ENCODE measurements at regions of chr12 and their contacts with region 1.

Region 1: GRCh38 chr12:12032851-12033588 is 37.7 kb upstream of the BCL2L14 start:
- DNase-seq: peak; percentile 88 to 90
- H3K4me3 ChIP-seq: peak overlapping the region; percentile 33
- H3K4me3 Mint-ChIP-seq: peak overlapping the region; percentile 63
- H3K27ac Mint-ChIP-seq: no peak overlapping the region
- H3K4me1 ChIP-seq: peaks cover 21% of the 10 kb centered on the region
- H3K4me1 Mint-ChIP-seq: peaks cover 13% of the 10 kb centered on the region
- H3K27me3 ChIP-seq: no peaks in the 10 kb centered on the region
- H3K27me3 Mint-ChIP-seq: no peaks in the 10 kb centered on the region
- CTCF ChIP-seq: peak; percentile 96 to 97

Region 2: DNA sequence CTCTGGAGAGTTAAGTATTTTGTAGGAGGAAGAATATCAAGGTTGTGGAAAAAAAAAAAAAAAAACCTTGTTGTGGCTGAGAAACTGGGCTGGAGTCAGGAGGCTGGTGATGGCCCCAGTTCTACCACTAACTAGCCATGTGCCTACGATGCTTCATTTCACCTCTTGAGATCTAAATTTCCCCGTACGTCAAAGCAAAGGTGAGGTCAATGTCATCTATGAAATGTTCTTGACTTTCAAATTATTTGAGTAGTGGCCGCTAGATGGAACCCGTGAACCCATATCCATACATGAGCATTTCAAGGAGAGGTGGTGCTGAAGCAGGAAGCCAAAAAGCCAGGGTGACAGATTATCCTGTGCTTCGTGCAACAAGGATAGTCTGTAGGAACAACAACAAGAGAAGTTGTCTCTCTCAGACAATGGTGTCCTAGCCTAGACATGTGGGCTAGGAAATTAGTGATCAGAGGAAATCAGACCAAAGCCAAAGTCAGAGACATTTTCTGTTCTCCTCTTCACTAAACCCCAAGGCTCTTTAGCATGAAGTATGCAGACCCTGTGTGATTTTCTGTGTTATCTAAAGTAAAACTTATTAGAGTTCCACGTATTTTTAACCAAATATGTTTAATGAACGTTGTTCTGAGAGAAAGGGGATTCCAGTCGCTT is 479.0 kb before region 1 on chr12:
- CTCF ChIA-PET with region 1: interaction called, 13 read pairs
- POLR2A ChIA-PET with region 1: no interaction called
- intact Hi-C with region 1: loop called (anchors 1 kb)
- DNase-seq: peak; percentile 65 to 70
- H3K4me3 ChIP-seq: no peak overlapping the region
- H3K4me3 Mint-ChIP-seq: no peak overlapping the region
- H3K27ac Mint-ChIP-seq: no peak overlapping the region
- H3K4me1 ChIP-seq: peaks cover 8% of the 10 kb centered on the region; the same call in 1 of the 2 replicates
- H3K4me1 Mint-ChIP-seq: peaks cover 12% of the 10 kb centered on the region
- H3K27me3 ChIP-seq: 0 out of 2 replicates have a peak, but pooled peaks cover 1% of the 10 kb centered on the region
- H3K27me3 Mint-ChIP-seq: peaks cover 22% of the 10 kb centered on the region
- CTCF ChIP-seq: peak; percentile 70 to 73

Region 3: GRCh38 chr12:11581179-11581755 is 451.8 kb before region 1 on chr12:
- CTCF ChIA-PET with region 1: interaction called, 45 read pairs
- POLR2A ChIA-PET with region 1: no interaction called
- intact Hi-C with region 1: loop called (anchors 1 kb)
- DNase-seq: peak; percentile 59 to 76
- H3K4me3 ChIP-seq: no peak overlapping the region
- H3K4me3 Mint-ChIP-seq: no peak overlapping the region
- H3K27ac Mint-ChIP-seq: no peak overlapping the region
- H3K4me1 ChIP-seq: no peaks in the 10 kb centered on the region
- H3K4me1 Mint-ChIP-seq: no peaks in the 10 kb centered on the region
- H3K27me3 ChIP-seq: no peaks in the 10 kb centered on the region
- H3K27me3 Mint-ChIP-seq: peaks cover 12% of the 10 kb centered on the region
- CTCF ChIP-seq: peak; percentile 66 to 94

Region 4: GRCh38 chr12:11621797-11622423 is 411.1 kb before region 1 on chr12:
- CTCF ChIA-PET with region 1: interaction called, 9 read pairs
- POLR2A ChIA-PET with region 1: no interaction called
- intact Hi-C with region 1: loop called (anchors 1 kb)
- DNase-seq: peak; percentile 29 to 45
- H3K4me3 ChIP-seq: no peak overlapping the region
- H3K4me3 Mint-ChIP-seq: no peak overlapping the region
- H3K27ac Mint-ChIP-seq: peak overlapping the region; percentile 80
- H3K4me1 ChIP-seq: peaks cover 19% of the 10 kb centered on the region
- H3K4me1 Mint-ChIP-seq: peaks cover 26% of the 10 kb centered on the region
- H3K27me3 ChIP-seq: no peaks in the 10 kb centered on the region
- H3K27me3 Mint-ChIP-seq: no peaks in the 10 kb centered on the region
- CTCF ChIP-seq: peak in 1 of 2 experiments; percentile 35

Region 5: DNA sequence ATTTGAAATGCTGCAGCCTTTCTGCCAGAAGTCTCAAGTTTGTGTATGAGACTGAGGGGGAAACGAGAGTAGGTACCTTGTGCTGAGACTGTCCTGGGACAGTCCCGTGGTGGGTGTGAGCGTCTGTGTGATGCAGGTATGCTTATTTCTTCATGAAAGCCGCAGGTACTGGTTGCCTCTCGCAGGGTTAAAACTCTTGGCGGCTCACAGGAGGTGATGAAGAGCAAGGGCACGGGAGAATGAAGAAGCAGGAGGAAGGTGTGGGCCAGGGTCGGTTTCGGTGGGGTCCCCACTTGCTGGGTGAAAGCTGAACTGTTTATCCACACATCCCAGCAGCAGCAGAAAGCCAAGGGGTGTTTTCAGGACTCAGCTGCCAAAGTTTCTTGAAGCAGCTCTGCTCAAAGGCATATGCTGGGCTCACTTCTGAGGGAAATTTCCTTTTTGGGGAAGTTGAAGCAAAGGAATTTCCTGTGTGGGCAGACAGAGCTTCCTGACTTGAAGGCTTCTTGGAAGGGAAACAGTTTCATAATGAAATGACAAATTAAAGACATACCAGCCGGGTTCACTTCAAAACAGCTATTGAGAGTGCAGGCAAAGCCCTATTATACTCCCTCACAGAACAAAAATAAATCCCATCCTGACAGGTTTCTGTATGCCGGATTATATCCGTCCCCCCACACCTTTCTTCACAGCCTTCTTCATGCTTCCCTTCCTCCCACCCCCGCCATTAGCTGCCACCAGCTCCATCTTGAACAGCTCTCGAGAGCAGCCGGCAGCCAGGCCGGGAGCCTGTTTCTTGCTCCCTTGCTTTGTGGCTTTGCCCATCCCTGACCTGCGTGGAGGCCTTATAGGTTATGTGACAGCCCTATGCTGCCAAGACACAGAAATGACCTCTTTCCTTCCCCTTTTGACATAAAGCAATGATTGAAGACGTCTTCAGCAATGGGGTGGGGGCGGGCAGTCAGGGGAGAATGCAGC is 266.9 kb before region 1 on chr12:
- CTCF ChIA-PET with region 1: no interaction called
- POLR2A ChIA-PET with region 1: no interaction called
- intact Hi-C with region 1: no loop called
- DNase-seq: no peak
- H3K4me3 ChIP-seq: no peak overlapping the region
- H3K4me3 Mint-ChIP-seq: no peak overlapping the region
- H3K27ac Mint-ChIP-seq: no peak overlapping the region
- H3K4me1 ChIP-seq: peaks cover 25% of the 10 kb centered on the region
- H3K4me1 Mint-ChIP-seq: peaks cover 13% of the 10 kb centered on the region
- H3K27me3 ChIP-seq: no peaks in the 10 kb centered on the region
- H3K27me3 Mint-ChIP-seq: no peaks in the 10 kb centered on the region
- CTCF ChIP-seq: no peak

Region 6: GRCh38 chr12:11798856-11799501 is 234.0 kb before region 1 on chr12:
- CTCF ChIA-PET with region 1: no interaction called
- POLR2A ChIA-PET with region 1: no interaction called
- intact Hi-C with region 1: loop called (anchors 10 kb)
- DNase-seq: no peak
- H3K4me3 ChIP-seq: no peak overlapping the region
- H3K4me3 Mint-ChIP-seq: no peak overlapping the region
- H3K27ac Mint-ChIP-seq: no peak overlapping the region
- H3K4me1 ChIP-seq: peaks cover 47% of the 10 kb centered on the region
- H3K4me1 Mint-ChIP-seq: peaks cover 46% of the 10 kb centered on the region
- H3K27me3 ChIP-seq: no peaks in the 10 kb centered on the region
- H3K27me3 Mint-ChIP-seq: no peaks in the 10 kb centered on the region
- CTCF ChIP-seq: no peak

Region 7: DNA sequence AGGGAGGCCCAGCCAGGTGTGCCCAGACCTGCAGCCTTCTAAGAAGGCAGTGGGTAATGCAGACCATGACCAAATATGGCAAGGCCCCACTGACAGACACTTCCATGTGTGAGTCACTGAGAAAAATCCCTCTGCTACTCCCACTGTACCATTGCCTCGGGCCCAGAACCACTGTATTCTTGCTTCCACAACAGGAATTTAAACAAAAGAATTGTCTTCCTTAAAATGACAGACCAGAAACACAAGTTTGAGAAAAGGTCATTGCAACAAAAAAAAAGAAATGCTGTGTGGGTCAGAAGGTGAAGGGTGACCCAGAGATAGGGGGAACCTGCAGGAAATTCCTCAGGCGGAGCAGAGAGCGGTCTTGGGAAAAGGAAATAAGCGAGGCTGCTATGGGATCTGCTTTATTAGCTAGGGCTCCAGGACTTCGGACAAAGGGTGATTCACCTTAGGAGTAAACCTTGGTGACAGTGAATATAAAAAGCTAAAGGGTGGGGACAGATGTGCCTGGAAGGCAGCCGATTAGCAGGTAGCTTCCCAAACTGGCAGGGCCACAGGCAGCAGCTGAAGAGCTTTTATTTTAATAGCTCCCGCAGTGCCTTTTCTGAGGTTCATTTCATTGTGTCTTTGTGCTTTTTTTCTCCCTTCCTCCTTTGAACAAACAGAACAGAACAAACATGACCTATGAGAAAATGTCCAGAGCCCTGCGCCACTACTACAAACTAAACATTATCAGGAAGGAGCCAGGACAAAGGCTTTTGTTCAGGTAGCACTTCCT is 147.6 kb before region 1 on chr12:
- CTCF ChIA-PET with region 1: interaction called, 6 read pairs
- POLR2A ChIA-PET with region 1: no interaction called
- intact Hi-C with region 1: loop called (anchors 5 kb)
- DNase-seq: peak; percentile 66 to 82
- H3K4me3 ChIP-seq: no peak overlapping the region
- H3K4me3 Mint-ChIP-seq: peak overlapping the region; percentile 57
- H3K27ac Mint-ChIP-seq: peak overlapping the region; percentile 67
- H3K4me1 ChIP-seq: peaks cover 49% of the 10 kb centered on the region
- H3K4me1 Mint-ChIP-seq: peaks cover 42% of the 10 kb centered on the region
- H3K27me3 ChIP-seq: no peaks in the 10 kb centered on the region
- H3K27me3 Mint-ChIP-seq: no peaks in the 10 kb centered on the region
- CTCF ChIP-seq: no peak

Region 8: DNA sequence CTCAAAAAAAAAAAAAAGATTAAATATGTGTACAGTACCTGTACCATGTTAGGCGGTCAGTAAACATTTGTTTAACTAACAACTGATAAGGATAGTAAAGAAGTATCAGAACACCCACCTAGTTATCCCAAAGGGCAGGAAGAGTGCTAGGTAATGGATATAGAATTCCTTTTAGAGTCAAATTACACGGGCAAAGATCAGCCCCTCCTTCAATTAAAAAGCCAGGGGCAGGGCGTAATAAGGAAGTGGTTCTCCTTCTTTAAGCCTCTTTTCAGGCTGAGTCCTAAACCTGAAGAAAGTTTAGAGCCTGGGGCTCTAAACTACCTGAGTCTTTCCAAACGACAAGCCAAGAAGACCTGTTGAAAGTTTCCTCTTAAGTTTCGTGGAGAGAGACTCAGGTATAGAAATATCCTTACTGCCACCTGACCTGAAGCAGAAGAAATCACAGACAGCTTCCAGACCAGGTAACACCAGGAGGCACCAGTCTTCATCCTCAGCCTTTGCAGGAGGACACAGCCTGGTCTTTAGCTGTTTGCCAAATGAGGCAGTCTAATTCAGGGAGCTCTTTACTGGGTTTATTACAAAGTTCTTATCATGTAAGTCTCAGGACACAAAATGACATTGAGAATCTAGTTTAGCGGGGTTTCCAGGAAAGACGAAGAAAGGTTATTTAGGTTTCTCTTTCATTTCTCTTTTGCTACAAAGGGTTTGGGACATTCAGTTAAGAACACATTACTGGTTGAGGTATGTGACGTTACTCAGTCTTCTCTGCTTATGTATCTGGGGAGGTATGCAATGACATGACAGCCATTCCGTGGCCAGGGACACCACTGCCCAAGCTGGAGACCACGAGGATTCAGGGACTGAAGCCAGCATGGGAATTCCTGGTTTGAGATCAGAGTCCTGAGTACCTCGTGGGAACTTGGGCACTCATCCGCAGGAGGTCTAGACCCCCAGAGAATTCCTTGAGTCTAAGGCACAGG is 37.9 kb after region 1 on chr12 and contains the start of gene BCL2L14:
- CTCF ChIA-PET with region 1: interaction called, 11 read pairs
- POLR2A ChIA-PET with region 1: no interaction called
- intact Hi-C with region 1: no loop called
- DNase-seq: peak; percentile 74 to 77
- H3K4me3 ChIP-seq: peak within 1 kb of the TSS; percentile 49
- H3K4me3 Mint-ChIP-seq: peak within 1 kb of the TSS; percentile 66
- H3K27ac Mint-ChIP-seq: peak within 1 kb of the TSS; percentile 73
- H3K4me1 ChIP-seq: peaks cover 27% of the 10 kb centered on the region
- H3K4me1 Mint-ChIP-seq: peaks cover 23% of the 10 kb centered on the region
- H3K27me3 ChIP-seq: no peaks in the 10 kb centered on the region
- H3K27me3 Mint-ChIP-seq: no peaks in the 10 kb centered on the region
- CTCF ChIP-seq: peak in 1 of 2 experiments; percentile 48
- total RNA-seq, gene BCL2L14: 5.9 and 8.0 TPM in 2 replicates